ENCODE measurements at regions of chr13 and their contacts with region 1.

Region 1: GRCh38 chr13:30673669-30674521 is 56.2 kb downstream of the USPL1 start:
- DNase-seq: peak; percentile 67
- ATAC-seq: peak; percentile 99
- H3K4me3 ChIP-seq: peak overlapping the region; percentile 54; the same call in 1 of the 2 replicates
- H3K27ac ChIP-seq: no peak overlapping the region
- H3K4me1 ChIP-seq: no peaks in the 10 kb centered on the region
- H3K27me3 ChIP-seq: no peaks in the 10 kb centered on the region
- CTCF ChIP-seq: peak; percentile 64 to 73 (median 71)
- EP300 ChIP-seq: peak in 1 of 2 experiments; percentile 50; a peak in 1 of 4 replicates
- POLR2A ChIP-seq: peak; percentile 57
- RAD21 ChIP-seq: peak; percentile 41

Region 2: DNA sequence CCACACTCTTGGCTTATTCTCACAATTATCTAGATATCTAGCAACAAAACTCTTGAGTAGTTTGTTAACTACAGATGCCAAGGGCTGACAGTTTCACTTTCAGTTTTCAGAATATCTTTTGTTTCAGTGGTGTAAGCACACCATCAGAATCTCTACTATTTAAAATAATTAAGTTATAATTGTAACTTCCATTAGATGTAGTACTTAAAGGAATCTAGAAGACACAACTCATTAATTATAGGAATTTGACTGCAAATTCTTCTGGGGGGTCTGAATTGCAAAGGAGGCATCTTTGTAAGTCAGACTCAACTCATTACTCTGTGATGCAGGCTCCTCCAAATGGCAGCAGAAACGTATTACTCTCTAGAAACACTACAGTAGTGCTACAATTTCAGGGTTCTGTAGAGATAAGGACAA is 101.0 kb before region 1 on chr13:
- CTCF ChIA-PET with region 1: no interaction called
- POLR2A ChIA-PET with region 1: interaction called, 3 read pairs
- RAD21 ChIA-PET with region 1: no interaction called
- SMC1A ChIA-PET with region 1: no interaction called
- in situ Hi-C with region 1: no loop called
- intact Hi-C with region 1: loop called (anchors 5 kb)
- DNase-seq: peak; percentile 28
- ATAC-seq: peak; percentile 81
- H3K4me3 ChIP-seq: no peak overlapping the region; the same call in 1 of the 2 replicates
- H3K27ac ChIP-seq: no peak overlapping the region
- H3K4me1 ChIP-seq: peaks cover 17% of the 10 kb centered on the region; the same call in 1 of the 2 replicates
- H3K27me3 ChIP-seq: peaks cover 0 to under 1% of the 10 kb centered on the region in 2 experiments; a peak in 1 of 4 replicates
- CTCF ChIP-seq: peak; percentile 5 to 35 (median 31); a peak in 3 of 6 replicates
- EP300 ChIP-seq: no peak
- POLR2A ChIP-seq: no peak
- RAD21 ChIP-seq: peak; percentile 68

Region 3: GRCh38 chr13:30617315-30618185 is 56.3 kb before region 1 on chr13 and contains the start of gene USPL1:
- CTCF ChIA-PET with region 1: no interaction called
- POLR2A ChIA-PET with region 1: no interaction called
- RAD21 ChIA-PET with region 1: interaction called, 4 read pairs
- SMC1A ChIA-PET with region 1: interaction called, 3 read pairs
- in situ Hi-C with region 1: no loop called
- intact Hi-C with region 1: loop called (anchors 1 kb)
- DNase-seq: peak; percentile 96
- ATAC-seq: peak; percentile 91
- H3K4me3 ChIP-seq: peak within 1 kb of the TSS; percentile 91
- H3K27ac ChIP-seq: peak within 1 kb of the TSS; percentile 93
- H3K4me1 ChIP-seq: peaks cover 8% of the 10 kb centered on the region
- H3K27me3 ChIP-seq: no peaks in the 10 kb centered on the region
- CTCF ChIP-seq: peak in 1 of 3 experiments; percentile 6; a peak in 1 of 6 replicates
- EP300 ChIP-seq: peak; percentile 84 to 95
- POLR2A ChIP-seq: peak; percentile 93
- RAD21 ChIP-seq: peak; percentile 17; the same call in 1 of the 2 replicates
- polyA plus RNA-seq, gene USPL1: 7.9 to 8.0 TPM

Measured in GM12878 (cell line).